Activated B cell treated with CpG ODN at 0.5 μM for 24 hours (primary cell): ENCODE measurements at regions of chr2 and their contacts with region 1.

Region 1: GRCh38 chr2:225041851-225042799 is at the start of gene DOCK10:
- DNase-seq: peak; percentile 63
- ATAC-seq: peak; percentile 43
- H3K4me3 Mint-ChIP-seq: peak within 1 kb of the TSS; percentile 96
- H3K27ac Mint-ChIP-seq: peak within 1 kb of the TSS; percentile 96
- H3K4me1 Mint-ChIP-seq: peaks cover 56% of the 10 kb centered on the region
- H3K27me3 Mint-ChIP-seq: no peaks in the 10 kb centered on the region
- CTCF ChIP-seq: no peak
- total RNA-seq, gene DOCK10: 159 and 172 TPM in 2 replicates

Region 2: GRCh38 chr2:224520064-224520463 is 522.1 kb before region 1 on chr2:
- CTCF ChIA-PET with region 1: no interaction called
- POLR2A ChIA-PET with region 1: no interaction called
- intact Hi-C with region 1: loop called (anchors 5 kb)
- DNase-seq: no peak
- ATAC-seq: no peak
- H3K4me3 Mint-ChIP-seq: peak overlapping the region; percentile 68
- H3K27ac Mint-ChIP-seq: peak overlapping the region; percentile 96
- H3K4me1 Mint-ChIP-seq: peaks cover 89% of the 10 kb centered on the region
- H3K27me3 Mint-ChIP-seq: no peaks in the 10 kb centered on the region
- CTCF ChIP-seq: no peak

Region 3: GRCh38 chr2:224691563-224691962 is 350.6 kb before region 1 on chr2:
- CTCF ChIA-PET with region 1: no interaction called
- POLR2A ChIA-PET with region 1: no interaction called
- intact Hi-C with region 1: no loop called
- DNase-seq: no peak
- ATAC-seq: no peak
- H3K4me3 Mint-ChIP-seq: no peak overlapping the region
- H3K27ac Mint-ChIP-seq: no peak overlapping the region
- H3K4me1 Mint-ChIP-seq: no peaks in the 10 kb centered on the region
- H3K27me3 Mint-ChIP-seq: no peaks in the 10 kb centered on the region
- CTCF ChIP-seq: no peak

Region 4: DNA sequence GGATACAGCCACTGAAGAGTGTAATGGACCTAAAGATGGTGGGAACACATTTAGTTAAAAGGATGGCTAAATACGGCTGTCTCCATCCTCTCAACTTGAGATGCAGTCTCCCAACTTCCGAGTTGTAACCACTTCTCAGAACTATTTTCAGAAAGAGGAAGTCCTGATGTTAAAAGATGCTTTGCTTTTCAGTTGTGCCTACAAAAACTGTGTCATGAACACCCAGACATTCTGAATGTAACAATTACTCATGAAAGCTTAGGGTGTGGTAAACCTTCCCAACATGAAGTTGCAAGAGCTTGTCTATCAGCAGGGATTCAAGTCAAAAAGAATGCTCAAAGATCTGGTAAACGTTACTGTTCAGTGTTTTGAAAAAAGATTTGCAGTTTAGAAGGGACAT is 147.8 kb before region 1 on chr2:
- CTCF ChIA-PET with region 1: no interaction called
- POLR2A ChIA-PET with region 1: interaction called, 4 read pairs
- intact Hi-C with region 1: loop called (anchors 1 kb)
- DNase-seq: no peak
- ATAC-seq: peak; percentile 70
- H3K4me3 Mint-ChIP-seq: peak overlapping the region; percentile 74
- H3K27ac Mint-ChIP-seq: peak overlapping the region; percentile 95
- H3K4me1 Mint-ChIP-seq: peaks cover 62% of the 10 kb centered on the region
- H3K27me3 Mint-ChIP-seq: no peaks in the 10 kb centered on the region
- CTCF ChIP-seq: no peak

Region 5: GRCh38 chr2:224984637-224985036 is 57.5 kb before region 1 on chr2:
- CTCF ChIA-PET with region 1: no interaction called
- POLR2A ChIA-PET with region 1: no interaction called
- intact Hi-C with region 1: no loop called
- DNase-seq: no peak
- ATAC-seq: peak; percentile 76
- H3K4me3 Mint-ChIP-seq: peak overlapping the region; percentile 50
- H3K27ac Mint-ChIP-seq: peak overlapping the region; percentile 76
- H3K4me1 Mint-ChIP-seq: peaks cover 50% of the 10 kb centered on the region
- H3K27me3 Mint-ChIP-seq: no peaks in the 10 kb centered on the region
- CTCF ChIP-seq: no peak

Region 6: DNA sequence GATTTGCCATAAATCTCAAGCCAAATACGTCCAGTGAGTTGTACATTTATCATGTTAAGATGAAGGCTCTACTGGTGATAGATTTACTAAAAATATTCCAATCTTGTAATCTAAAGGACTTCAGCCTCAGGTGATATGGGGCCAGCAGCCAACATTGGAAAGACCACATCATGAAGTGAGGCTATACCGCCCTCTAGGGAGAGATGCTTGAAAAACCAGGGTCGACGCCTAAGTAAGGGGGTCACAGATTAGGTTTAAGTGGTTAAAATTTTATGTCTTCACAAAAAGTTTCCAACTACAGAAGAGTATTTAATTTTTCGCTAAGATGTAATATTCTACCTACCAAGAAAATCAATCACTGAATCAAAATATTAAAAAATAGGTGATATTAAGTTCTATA is 33.2 kb before region 1 on chr2:
- CTCF ChIA-PET with region 1: interaction called, 6 read pairs
- POLR2A ChIA-PET with region 1: interaction called, 3 read pairs
- intact Hi-C with region 1: loop called (anchors 1 kb)
- DNase-seq: no peak
- ATAC-seq: no peak
- H3K4me3 Mint-ChIP-seq: no peak overlapping the region
- H3K27ac Mint-ChIP-seq: peak overlapping the region; percentile 36
- H3K4me1 Mint-ChIP-seq: peaks cover 58% of the 10 kb centered on the region
- H3K27me3 Mint-ChIP-seq: no peaks in the 10 kb centered on the region
- CTCF ChIP-seq: no peak

Region 7: DNA sequence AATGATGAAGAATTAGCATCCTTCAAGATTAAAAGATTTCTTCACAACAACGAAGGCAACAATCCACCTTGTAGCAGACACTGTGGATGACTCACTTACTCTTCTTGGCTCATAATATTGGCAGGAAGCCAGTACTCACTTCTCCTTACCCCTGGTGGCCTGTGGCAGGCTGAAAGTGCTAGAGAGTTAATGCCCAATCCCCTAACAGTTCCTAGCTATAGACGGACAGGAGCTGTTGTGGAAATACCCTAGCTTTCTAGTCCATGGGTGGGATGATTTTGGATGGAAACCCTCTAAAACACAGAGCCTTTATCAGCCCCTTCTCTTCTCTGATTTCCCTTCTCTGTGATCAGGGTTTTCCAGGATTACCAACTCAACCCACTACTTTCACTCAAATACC is 228.7 kb after region 1 on chr2:
- CTCF ChIA-PET with region 1: no interaction called
- POLR2A ChIA-PET with region 1: no interaction called
- intact Hi-C with region 1: loop called (anchors 5 kb)
- DNase-seq: peak; percentile 19
- ATAC-seq: peak; percentile 98
- H3K4me3 Mint-ChIP-seq: no peak overlapping the region
- H3K27ac Mint-ChIP-seq: peak overlapping the region; percentile 30
- H3K4me1 Mint-ChIP-seq: peaks cover 39% of the 10 kb centered on the region
- H3K27me3 Mint-ChIP-seq: no peaks in the 10 kb centered on the region
- CTCF ChIP-seq: no peak

Region 8: GRCh38 chr2:226906163-226906693 is 1864.1 kb after region 1 on chr2:
- CTCF ChIA-PET with region 1: no interaction called
- POLR2A ChIA-PET with region 1: no interaction called
- intact Hi-C with region 1: loop called (anchors 10 kb)
- DNase-seq: no peak
- ATAC-seq: peak; percentile 84
- H3K4me3 Mint-ChIP-seq: peak overlapping the region; percentile 73
- H3K27ac Mint-ChIP-seq: peak overlapping the region; percentile 94
- H3K4me1 Mint-ChIP-seq: peaks cover 97% of the 10 kb centered on the region
- H3K27me3 Mint-ChIP-seq: no peaks in the 10 kb centered on the region
- CTCF ChIP-seq: no peak